Heart right ventricle (tissue), 16 donors: ENCODE measurements at regions of chr6 and their contacts with region 1.

Region 1: GRCh38 chr6:32952817-32953739 is at the start of gene HLA-DMA:
- DNase-seq: peak; percentile 70 to 92
- ATAC-seq: peak; percentile 98 to 100 (median 99)
- H3K4me3 ChIP-seq: peak within 1 kb of the TSS in 9 of 10 donors; percentile 19 to 55 (median 44)
- H3K27ac ChIP-seq: peak within 1 kb of the TSS in 9 of 10 donors; percentile 61 to 90 (median 74)
- H3K4me1 ChIP-seq: peaks cover 0 to 61% (median 16%) of the 10 kb centered on the region in 9 donors
- H3K27me3 ChIP-seq: no peaks in the 10 kb centered on the region
- CTCF ChIP-seq: peak; percentile 71 to 91 (median 84)
- total RNA-seq, gene HLA-DMA: 7.8 to 106 (median 14.5) TPM

Region 2: DNA sequence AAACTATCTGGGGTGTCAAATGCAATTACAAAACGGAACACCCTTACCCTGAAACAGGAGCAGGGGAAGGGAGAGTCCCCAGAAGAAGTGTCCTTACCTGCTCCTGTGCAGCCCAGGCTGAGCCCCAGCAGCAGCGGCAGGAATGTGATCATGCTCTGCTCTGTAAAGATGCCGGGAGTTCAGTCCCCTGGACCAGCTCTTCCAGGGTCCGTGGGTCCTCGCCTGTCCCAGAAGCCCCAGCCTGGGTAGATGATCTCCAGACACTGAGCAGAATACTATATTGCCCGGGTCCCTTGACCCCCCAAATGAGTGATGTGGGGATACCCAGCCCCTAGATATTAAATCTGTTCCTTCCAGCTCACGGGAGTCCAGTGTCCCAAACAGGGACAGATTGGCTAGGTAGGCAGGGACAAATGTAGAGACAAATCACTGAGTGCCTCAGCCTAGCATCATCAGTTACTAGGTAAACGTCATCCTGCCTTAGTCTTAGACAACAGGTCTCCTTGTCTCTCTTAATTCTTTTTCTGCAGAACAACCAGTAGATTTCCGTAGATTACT is 12.3 kb before region 1 on chr6 and contains the start of gene HLA-DMB:
- intact Hi-C with region 1: loop called in 1 of 10 experiments (anchors 1 kb)
- DNase-seq: peak in 1 of 2 donors; percentile 86
- ATAC-seq: peak; percentile 94 to 97 (median 96)
- H3K4me3 ChIP-seq: peak within 1 kb of the TSS; percentile 8 to 62 (median 55)
- H3K27ac ChIP-seq: peak within 1 kb of the TSS; percentile 71 to 95 (median 84)
- H3K4me1 ChIP-seq: peaks cover 0 to 90% (median 15%) of the 10 kb centered on the region in 9 donors
- H3K27me3 ChIP-seq: no peaks in the 10 kb centered on the region
- CTCF ChIP-seq: no peak
- total RNA-seq, gene HLA-DMB: 2.7 to 79.8 (median 7.6) TPM

Region 3: GRCh38 chr6:33882154-33882553 is 929.1 kb after region 1 on chr6:
- intact Hi-C with region 1: no loop called
- DNase-seq: peak; percentile 14 to 38
- ATAC-seq: peak in 5 of 8 donors; percentile 13 to 49 (median 33)
- H3K4me3 ChIP-seq: no peak overlapping the region
- H3K27ac ChIP-seq: no peak overlapping the region
- H3K4me1 ChIP-seq: peaks cover 0 to 20% (median 18%) of the 10 kb centered on the region in 9 donors
- H3K27me3 ChIP-seq: peaks cover 0 to 50% (median 29%) of the 10 kb centered on the region in 7 donors
- CTCF ChIP-seq: no peak